ENCODE measurements at regions of chr7 and their contacts with region 1.

Region 1: GRCh38 chr7:5780801-5781496 is 514 bp downstream of the RNF216 start:
- DNase-seq: peak; percentile 38
- H3K4me3 Mint-ChIP-seq: peak overlapping the region; percentile 78
- H3K27ac Mint-ChIP-seq: peak overlapping the region; percentile 82
- H3K4me1 Mint-ChIP-seq: peaks cover 39% of the 10 kb centered on the region
- H3K27me3 Mint-ChIP-seq: no peaks in the 10 kb centered on the region

Region 2: DNA sequence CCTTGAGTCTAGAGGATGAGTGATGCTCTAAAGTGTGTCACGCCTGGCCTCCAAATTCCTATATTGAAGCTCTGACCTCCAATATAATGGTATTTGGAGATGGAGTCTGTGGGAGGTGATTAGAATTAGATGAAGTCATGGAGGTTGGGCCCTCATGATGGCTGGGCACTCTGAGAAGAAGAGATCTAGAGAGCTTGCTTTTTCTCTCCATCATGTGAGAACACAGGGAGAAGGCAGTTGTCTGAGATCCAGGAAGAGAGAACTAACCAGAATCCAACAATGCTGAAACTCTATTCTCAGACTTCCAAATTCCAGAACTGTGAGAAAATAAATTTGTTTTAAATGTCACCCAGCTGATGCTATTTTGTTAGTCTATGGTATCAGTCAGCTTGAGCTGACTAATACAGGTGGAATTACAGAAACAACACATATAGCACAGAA is 14.6 kb before region 1 on chr7:
- CTCF ChIA-PET with region 1: interaction called, 23 read pairs
- POLR2A ChIA-PET with region 1: interaction called, 7 read pairs
- DNase-seq: no peak
- H3K4me3 Mint-ChIP-seq: no peak overlapping the region
- H3K27ac Mint-ChIP-seq: no peak overlapping the region
- H3K4me1 Mint-ChIP-seq: peaks cover 4% of the 10 kb centered on the region
- H3K27me3 Mint-ChIP-seq: no peaks in the 10 kb centered on the region

Region 3: DNA sequence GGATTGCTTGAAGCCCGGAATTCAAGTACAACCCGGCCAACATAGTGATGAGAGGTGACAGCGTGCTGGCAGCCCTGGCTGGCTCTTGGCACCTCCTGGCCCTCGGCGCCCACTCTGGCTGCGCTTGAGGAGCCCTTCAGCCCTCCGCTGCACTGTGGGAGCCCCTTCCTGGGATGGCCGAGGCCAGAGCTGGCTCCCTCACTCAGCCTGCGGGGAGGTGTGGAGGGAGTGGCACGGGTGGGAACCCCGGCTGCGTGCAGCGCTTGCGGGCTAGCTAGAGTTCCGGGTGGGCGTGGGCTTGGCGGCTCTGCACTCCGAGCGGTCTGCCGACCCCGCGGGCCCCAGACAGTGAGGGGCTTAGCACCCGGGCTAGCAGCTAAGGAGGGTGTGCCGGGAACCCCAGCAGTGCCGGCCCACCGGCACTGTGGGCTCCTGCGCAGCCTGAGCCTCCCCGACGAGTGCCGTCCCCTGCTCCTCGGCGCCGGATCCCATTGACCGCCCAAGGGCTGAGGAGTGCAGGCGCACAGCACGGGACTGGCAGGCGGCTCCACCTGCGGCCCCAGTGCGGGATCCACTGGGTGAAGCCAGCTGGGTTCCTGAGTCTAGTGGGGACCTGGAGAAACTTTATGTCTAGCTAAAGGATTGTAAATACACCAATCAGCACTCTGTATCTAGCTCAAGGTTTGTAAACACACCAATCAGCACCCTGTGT is 12.6 kb after region 1 on chr7:
- CTCF ChIA-PET with region 1: interaction called, 13 read pairs
- POLR2A ChIA-PET with region 1: interaction called, 3 read pairs
- DNase-seq: no peak
- H3K4me3 Mint-ChIP-seq: no peak overlapping the region
- H3K27ac Mint-ChIP-seq: no peak overlapping the region
- H3K4me1 Mint-ChIP-seq: peaks cover 13% of the 10 kb centered on the region
- H3K27me3 Mint-ChIP-seq: no peaks in the 10 kb centered on the region

Region 4: DNA sequence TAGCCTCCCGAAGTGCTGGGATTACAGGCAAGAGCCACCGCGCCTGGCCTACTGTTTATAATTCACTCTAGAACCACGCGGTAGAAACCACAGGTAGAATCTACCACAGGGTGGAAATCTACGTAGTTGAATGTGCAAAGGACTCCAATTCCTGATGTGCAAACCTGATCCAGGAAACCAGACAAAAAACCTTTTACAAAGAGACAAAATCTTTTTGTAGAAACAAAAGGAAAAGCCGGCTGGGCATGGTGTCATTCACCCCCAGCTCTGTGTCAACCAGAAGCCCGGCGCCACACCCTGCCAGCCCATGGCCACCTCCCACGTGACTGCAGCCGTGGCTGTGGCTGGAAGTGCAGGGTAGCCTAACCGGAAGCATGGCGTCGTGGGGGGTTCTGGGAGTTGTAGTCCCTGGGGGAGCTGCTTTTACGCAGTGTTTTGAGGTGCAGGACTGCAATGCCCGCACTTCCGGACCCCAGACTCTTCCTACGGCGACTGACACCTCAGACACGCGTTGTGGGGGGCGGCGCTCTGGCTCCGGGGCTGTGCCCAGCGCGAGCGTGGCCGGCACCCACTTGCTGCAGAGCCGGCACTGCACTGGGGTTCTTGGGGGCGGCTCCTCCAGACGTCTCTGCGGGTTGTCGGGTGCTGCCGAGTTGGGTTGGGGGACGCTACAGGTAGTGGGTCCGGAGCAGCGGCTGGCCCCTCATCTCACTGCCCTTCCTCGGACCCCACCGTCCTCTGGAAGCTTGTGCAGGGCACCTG is 42.0 kb after region 1 on chr7:
- CTCF ChIA-PET with region 1: interaction called, 16 read pairs
- POLR2A ChIA-PET with region 1: interaction called, 16 read pairs
- DNase-seq: peak; percentile 99
- H3K4me3 Mint-ChIP-seq: peak overlapping the region; percentile 86
- H3K27ac Mint-ChIP-seq: peak overlapping the region; percentile 95
- H3K4me1 Mint-ChIP-seq: peaks cover 30% of the 10 kb centered on the region
- H3K27me3 Mint-ChIP-seq: peaks cover 1% of the 10 kb centered on the region